ENCODE measurements at regions of chr1 and their contacts with region 1.

Region 1: GRCh38 chr1:24536391-24536840 is 19.5 kb upstream of the NCMAP start:
- DNase-seq: peak; percentile 51
- ATAC-seq: peak; percentile 73
- H3K4me3 Mint-ChIP-seq: peak overlapping the region; percentile 81
- H3K27ac Mint-ChIP-seq: peak overlapping the region; percentile 99
- H3K4me1 Mint-ChIP-seq: peaks cover 74% of the 10 kb centered on the region
- H3K27me3 Mint-ChIP-seq: no peaks in the 10 kb centered on the region
- CTCF ChIP-seq: no peak

Region 2: DNA sequence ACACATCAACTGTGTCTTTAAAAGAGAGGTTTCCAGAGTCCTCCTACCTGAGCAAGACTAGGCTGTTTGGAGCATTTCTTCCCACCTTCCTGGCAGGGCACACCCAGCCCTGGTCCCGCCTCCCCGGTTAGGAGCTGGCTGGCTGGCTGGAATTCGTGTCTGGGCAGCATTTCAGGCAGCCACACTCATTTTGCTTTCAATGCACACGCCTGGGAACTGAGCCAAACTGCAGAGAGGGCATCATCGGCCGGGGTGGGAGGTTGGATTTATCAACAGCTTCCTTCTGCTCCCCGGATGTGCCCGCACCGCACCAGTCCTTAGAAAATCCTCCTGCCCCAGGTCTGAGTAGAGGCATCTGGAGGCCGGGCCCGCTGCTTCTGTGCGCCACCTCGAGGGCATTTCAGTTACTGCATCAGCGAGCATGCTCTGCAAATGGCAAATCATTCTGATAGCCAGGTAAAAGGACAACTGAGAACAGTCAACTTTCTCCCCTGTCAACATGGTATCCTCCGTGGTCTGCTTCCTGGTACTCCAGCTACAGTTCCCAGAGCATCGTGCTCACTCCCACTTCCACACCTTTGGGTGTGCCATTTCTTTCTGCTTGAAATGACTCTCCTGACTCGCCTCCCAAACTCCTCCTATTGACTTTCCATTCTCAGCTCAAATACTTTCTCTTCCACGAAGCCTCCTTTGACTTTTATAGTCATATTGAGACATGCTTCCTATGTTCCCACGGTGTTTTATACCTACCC is 1132.5 kb before region 1 on chr1:
- CTCF ChIA-PET with region 1: no interaction called
- POLR2A ChIA-PET with region 1: no interaction called
- intact Hi-C with region 1: no loop called
- DNase-seq: peak; percentile 71
- ATAC-seq: peak; percentile 95
- H3K4me3 Mint-ChIP-seq: no peak overlapping the region
- H3K27ac Mint-ChIP-seq: no peak overlapping the region
- H3K4me1 Mint-ChIP-seq: no peaks in the 10 kb centered on the region
- H3K27me3 Mint-ChIP-seq: peaks cover 7% of the 10 kb centered on the region
- CTCF ChIP-seq: peak; percentile 78

Region 3: GRCh38 chr1:24048205-24048869 is 488.1 kb before region 1 on chr1:
- CTCF ChIA-PET with region 1: no interaction called
- POLR2A ChIA-PET with region 1: no interaction called
- intact Hi-C with region 1: no loop called
- DNase-seq: no peak
- ATAC-seq: no peak
- H3K4me3 Mint-ChIP-seq: no peak overlapping the region
- H3K27ac Mint-ChIP-seq: no peak overlapping the region
- H3K4me1 Mint-ChIP-seq: no peaks in the 10 kb centered on the region
- H3K27me3 Mint-ChIP-seq: peaks cover 5% of the 10 kb centered on the region
- CTCF ChIP-seq: no peak

Region 4: DNA sequence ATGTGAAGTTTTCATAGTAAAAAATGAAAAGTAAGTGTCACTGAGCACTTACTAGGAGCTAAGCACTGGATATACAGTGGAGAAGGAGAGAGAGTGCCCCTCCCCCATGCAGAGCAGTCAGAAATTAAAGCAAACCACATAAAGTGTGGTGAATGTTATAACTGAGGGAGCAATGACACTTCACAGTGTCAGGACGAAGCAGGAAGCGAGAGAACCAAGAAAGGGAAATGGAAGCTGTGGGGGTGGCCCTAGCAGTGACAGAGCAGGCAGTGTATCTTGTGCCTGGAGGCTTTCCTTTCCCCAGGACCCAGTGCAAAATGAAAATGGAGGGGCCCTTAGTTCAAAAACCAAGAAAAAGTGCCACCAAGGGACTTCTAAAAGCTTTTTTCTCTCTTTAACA is 55.3 kb before region 1 on chr1:
- CTCF ChIA-PET with region 1: no interaction called
- POLR2A ChIA-PET with region 1: interaction called, 9 read pairs
- intact Hi-C with region 1: loop called (anchors 2 kb)
- DNase-seq: peak; percentile 29
- ATAC-seq: peak; percentile 94
- H3K4me3 Mint-ChIP-seq: peak overlapping the region; percentile 58
- H3K27ac Mint-ChIP-seq: peak overlapping the region; percentile 91
- H3K4me1 Mint-ChIP-seq: peaks cover 36% of the 10 kb centered on the region
- H3K27me3 Mint-ChIP-seq: no peaks in the 10 kb centered on the region
- CTCF ChIP-seq: no peak

Region 5: DNA sequence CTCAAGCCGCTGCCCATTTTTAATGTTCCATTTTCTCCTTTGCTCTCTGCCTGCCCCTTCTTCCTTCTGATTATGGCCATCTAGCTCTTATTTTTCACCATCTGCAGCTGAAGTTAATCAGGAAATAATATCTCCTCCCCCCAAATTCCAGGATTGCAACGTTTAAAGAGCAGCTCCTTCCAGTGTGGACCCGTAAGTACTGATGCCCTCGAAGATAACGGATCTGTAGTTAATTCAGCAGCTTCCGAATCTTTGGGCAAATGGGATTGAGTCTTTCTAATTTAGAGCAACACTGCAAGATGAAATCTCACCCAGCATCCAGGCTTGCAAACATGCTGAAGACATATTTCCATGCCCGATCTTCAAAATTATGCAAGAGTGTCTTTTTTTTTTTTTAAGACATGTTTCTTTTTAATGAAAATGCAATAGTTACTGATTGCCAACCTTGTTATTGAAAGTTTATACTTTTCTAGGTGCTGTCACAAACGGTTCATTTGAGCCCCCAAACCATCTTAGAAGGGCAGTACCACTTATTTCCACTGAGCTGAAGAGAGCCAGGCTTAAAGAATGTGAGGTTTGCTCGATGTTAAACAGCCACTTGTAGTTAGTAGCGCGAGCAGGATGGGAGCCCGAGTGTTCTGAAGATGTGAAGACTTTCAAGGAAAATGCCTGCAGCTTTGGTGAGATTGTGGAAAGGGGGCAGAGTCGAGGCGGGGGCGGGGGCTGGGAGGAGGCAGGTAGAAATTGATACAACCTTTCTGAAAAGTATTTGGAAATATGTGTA is 44.6 kb before region 1 on chr1:
- CTCF ChIA-PET with region 1: no interaction called
- POLR2A ChIA-PET with region 1: interaction called, 4 read pairs
- intact Hi-C with region 1: loop called (anchors 1 kb)
- DNase-seq: no peak
- ATAC-seq: no peak
- H3K4me3 Mint-ChIP-seq: no peak overlapping the region
- H3K27ac Mint-ChIP-seq: no peak overlapping the region
- H3K4me1 Mint-ChIP-seq: peaks cover 15% of the 10 kb centered on the region
- H3K27me3 Mint-ChIP-seq: no peaks in the 10 kb centered on the region
- CTCF ChIP-seq: no peak

Region 6: GRCh38 chr1:24642481-24643361 is 106.3 kb after region 1 on chr1 and contains the start of gene SRRM1:
- CTCF ChIA-PET with region 1: interaction called, 3 read pairs
- POLR2A ChIA-PET with region 1: interaction called, 3 read pairs
- intact Hi-C with region 1: loop called (anchors 2 kb)
- DNase-seq: peak; percentile 96
- ATAC-seq: peak; percentile 90
- H3K4me3 Mint-ChIP-seq: peak within 1 kb of the TSS; percentile 96
- H3K27ac Mint-ChIP-seq: peak within 1 kb of the TSS; percentile 99
- H3K4me1 Mint-ChIP-seq: peaks cover 38% of the 10 kb centered on the region
- H3K27me3 Mint-ChIP-seq: no peaks in the 10 kb centered on the region
- CTCF ChIP-seq: no peak
- total RNA-seq, gene SRRM1: 214 and 220 TPM in 2 replicates

Region 7: GRCh38 chr1:24694380-24694843 is 158.0 kb after region 1 on chr1:
- CTCF ChIA-PET with region 1: no interaction called
- POLR2A ChIA-PET with region 1: no interaction called
- intact Hi-C with region 1: no loop called
- DNase-seq: no peak
- ATAC-seq: peak; percentile 53
- H3K4me3 Mint-ChIP-seq: peak overlapping the region; percentile 45
- H3K27ac Mint-ChIP-seq: peak overlapping the region; percentile 76
- H3K4me1 Mint-ChIP-seq: peaks cover 35% of the 10 kb centered on the region
- H3K27me3 Mint-ChIP-seq: no peaks in the 10 kb centered on the region
- CTCF ChIP-seq: no peak

Measured in activated B cell treated with CpG ODN at 0.5 μM for 24 hours (primary cell).